Gastrocnemius medialis (tissue), 4 donors: ENCODE measurements at regions of chr17 and their contacts with region 1.

Region 1: GRCh38 chr17:49031965-49032928 is 35.1 kb downstream of the IGF2BP1 start:
- DNase-seq: peak in 1 of 2 donors; percentile 14
- ATAC-seq: peak; percentile 56 to 79
- H3K4me3 ChIP-seq: no peak overlapping the region
- H3K27ac ChIP-seq: no peak overlapping the region
- H3K4me1 ChIP-seq: no peaks in the 10 kb centered on the region
- H3K27me3 ChIP-seq: peaks cover 4 to 15% (median 6%) of the 10 kb centered on the region in 3 donors
- CTCF ChIP-seq: peak; percentile 40 to 77 (median 55)
- POLR2A ChIP-seq: no peak

Region 2: DNA sequence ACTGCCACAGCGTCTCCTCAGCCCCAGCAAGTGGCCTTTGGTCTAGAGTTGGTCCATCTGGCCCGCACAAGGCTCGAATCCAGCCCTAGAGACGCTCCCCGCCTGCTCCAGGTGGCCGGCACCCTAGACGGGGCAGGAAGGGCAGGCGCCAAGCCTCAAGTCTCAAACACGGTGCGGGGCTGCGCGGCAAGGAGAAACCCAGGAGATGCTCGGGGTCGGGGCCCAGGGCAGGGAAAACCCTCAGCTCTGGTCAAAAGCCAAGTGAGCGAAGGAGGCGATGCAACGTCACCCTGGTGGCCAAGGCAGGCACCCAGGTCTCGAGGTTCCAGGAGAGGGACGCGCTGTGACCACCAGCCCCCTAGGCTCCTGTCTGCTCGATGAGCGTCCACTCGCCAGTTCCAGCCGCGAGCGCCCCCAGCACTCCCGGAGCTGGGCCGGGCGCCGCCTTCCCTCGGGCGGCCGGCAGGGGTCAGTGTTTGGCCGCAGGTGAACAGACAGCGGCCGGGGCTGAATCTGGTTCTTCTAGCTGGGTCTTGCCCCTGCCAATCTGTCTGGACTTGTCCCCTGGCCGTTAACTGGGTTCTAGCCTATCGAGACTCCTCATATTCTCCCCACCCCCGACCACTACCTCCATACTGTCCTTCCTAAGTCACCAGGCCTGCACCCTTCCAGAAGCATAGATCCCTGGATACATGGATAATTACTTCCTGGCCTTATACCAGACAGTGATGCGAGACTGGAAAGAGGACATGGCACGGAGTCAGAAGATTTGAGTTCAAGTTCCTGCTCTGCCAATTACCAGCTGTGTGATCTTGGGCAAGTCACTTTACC is 353.9 kb before region 1 on chr17:
- in situ Hi-C with region 1: no loop called
- intact Hi-C with region 1: loop called (anchors 5 kb)
- DNase-seq: peak; percentile 7 to 29
- ATAC-seq: peak; percentile 39 to 71
- H3K4me3 ChIP-seq: no peak overlapping the region
- H3K27ac ChIP-seq: no peak overlapping the region
- H3K4me1 ChIP-seq: peaks cover 0 to 4% of the 10 kb centered on the region in 2 donors
- H3K27me3 ChIP-seq: peaks cover 5 to 20% (median 10%) of the 10 kb centered on the region in 3 donors
- CTCF ChIP-seq: peak; percentile 64 to 93 (median 84)
- POLR2A ChIP-seq: no peak

Region 3: DNA sequence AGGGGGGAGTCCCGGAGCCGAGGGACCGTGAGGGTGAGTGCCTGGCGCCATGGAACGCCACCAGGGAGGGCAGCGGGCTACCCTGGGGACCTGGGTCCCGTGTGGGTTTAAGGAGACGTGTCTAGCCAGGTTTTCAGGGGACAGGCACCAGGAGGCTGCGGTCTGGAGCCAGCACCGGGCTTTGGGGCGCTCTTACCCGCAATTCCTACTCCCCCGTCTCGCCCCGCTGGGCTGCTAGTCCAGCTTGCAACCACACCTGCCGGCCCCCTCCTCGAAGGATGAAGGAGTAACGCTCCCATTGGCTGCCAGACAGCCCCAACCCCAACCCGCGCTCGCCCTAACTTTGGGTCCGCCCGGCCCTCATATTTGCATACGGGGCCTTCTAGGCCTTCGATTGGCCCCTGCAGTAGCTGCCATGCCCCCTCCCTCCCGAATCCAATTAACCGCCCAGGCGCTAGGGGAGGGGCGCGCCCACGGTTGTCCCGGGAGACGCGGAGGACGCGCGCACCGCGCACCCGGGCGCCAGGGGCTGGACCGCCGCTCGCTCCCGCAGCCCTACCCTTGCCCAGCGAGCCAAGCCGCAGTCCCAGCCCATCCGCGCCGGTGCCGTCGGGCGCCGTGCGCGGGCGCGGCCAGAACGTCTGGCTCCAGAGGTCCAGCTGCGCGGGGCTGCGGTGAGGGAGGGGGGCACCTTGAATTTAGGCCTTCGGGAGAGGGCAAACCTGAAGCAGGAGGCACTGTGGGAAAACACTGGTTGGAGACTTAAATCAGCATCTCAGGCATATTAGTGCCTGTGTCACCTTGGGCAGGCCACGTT is 215.3 kb before region 1 on chr17 and contains the start of gene TTLL6:
- in situ Hi-C with region 1: loop called in 1 of 4 experiments (anchors 25 kb)
- intact Hi-C with region 1: no loop called
- DNase-seq: peak; percentile 38 to 50
- ATAC-seq: peak; percentile 72 to 75
- H3K4me3 ChIP-seq: peak within 1 kb of the TSS; percentile 44 to 51 (median 49)
- H3K27ac ChIP-seq: no peak within 1 kb of the TSS
- H3K4me1 ChIP-seq: peaks cover 0 to 10% of the 10 kb centered on the region in 2 donors
- H3K27me3 ChIP-seq: peaks cover 37 to 50% (median 40%) of the 10 kb centered on the region in 3 donors
- CTCF ChIP-seq: no peak
- POLR2A ChIP-seq: no peak
- total RNA-seq, gene TTLL6: 0.10 TPM in 2 of 4 donors, not detected in the others